ENCODE measurements at regions of chr3 and their contacts with region 1.

Region 1: DNA sequence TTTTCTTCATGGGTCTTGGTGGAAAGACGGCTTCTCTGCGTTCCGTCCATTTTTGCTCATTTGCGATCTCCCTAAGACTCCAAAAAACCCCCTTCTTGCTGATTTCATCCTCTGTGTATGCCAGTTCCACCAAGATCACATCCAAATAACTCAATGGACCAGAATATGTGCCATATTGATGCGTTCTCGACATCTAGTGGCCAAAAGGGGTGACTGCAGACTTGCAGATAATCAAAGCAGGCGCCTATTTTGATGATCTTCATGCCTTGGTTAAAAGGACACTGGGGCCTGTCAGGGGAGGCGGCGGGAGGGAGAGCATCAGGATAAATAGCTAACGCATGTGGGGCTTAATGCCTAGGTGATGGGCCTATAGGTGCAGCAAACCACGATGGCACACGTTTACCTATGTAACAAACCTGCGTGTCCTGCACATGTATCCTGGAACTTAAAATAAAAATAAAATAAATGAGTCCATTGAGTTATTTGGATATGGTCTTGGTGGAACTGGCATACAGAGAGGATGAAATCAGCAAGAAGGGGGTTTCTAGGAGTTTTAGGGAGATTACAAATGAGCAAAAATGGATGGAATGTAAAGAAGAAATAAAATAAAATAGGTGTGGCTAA is 104.2 kb upstream of the RAD18 start:
- DNase-seq: peak in 3 of 5 donors; percentile 33 to 73 (median 51)
- H3K4me3 ChIP-seq: no peak overlapping the region
- H3K27ac ChIP-seq: no peak overlapping the region
- H3K4me1 ChIP-seq: no peaks in the 10 kb centered on the region
- H3K27me3 ChIP-seq: no peaks in the 10 kb centered on the region
- CTCF ChIP-seq: peak; percentile 78

Region 2: DNA sequence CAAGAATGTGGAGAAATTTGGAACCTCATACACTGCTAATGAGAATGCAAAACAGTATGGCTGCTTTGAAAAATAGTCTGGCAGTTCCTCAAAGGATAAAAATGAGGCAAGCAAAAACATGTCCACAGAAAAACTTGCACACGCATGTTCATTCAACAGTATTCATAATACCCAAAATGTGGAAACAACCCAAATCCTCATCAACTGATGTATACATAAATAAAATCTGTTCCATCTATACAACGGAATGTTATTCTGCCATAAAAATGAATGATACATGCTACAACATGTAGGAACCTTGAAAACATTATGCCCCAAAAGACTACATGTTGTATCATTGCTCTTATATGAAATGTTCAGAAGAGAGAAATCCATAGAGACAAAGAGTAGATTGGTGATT is 261.7 kb before region 1 on chr3:
- intact Hi-C with region 1: no loop called
- DNase-seq: no peak
- H3K4me3 ChIP-seq: no peak overlapping the region
- H3K27ac ChIP-seq: no peak overlapping the region
- H3K4me1 ChIP-seq: no peaks in the 10 kb centered on the region
- H3K27me3 ChIP-seq: no peaks in the 10 kb centered on the region
- CTCF ChIP-seq: no peak

Region 3: DNA sequence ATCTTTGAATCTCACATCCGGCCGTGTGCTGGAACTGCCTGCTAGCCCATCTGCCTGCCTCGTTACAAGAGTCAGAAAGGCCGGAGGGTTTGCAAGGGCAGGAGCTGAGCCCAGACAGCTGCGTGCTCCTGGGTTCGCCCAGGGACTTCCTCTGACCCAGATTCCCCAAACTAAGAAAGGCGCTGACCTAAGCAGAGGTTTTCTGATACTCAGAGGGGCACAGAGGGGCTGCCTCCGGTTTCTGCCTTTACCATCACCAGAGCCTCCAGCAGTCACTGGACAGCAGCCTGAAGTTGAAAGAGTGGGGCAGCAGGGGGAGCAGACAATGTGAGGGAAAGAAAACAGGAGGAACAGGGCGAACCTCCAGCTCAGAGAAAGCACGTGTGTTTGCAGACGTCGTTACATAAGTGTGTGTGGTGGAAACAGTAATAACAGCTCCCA is 70.8 kb before region 1 on chr3:
- intact Hi-C with region 1: loop called (anchors 10 kb)
- DNase-seq: peak in 3 of 5 donors; percentile 46 to 78 (median 50)
- H3K4me3 ChIP-seq: no peak overlapping the region
- H3K27ac ChIP-seq: no peak overlapping the region
- H3K4me1 ChIP-seq: peaks cover 0 to 2% (median 0%) of the 10 kb centered on the region in 3 donors
- H3K27me3 ChIP-seq: no peaks in the 10 kb centered on the region
- CTCF ChIP-seq: no peak

Region 4: DNA sequence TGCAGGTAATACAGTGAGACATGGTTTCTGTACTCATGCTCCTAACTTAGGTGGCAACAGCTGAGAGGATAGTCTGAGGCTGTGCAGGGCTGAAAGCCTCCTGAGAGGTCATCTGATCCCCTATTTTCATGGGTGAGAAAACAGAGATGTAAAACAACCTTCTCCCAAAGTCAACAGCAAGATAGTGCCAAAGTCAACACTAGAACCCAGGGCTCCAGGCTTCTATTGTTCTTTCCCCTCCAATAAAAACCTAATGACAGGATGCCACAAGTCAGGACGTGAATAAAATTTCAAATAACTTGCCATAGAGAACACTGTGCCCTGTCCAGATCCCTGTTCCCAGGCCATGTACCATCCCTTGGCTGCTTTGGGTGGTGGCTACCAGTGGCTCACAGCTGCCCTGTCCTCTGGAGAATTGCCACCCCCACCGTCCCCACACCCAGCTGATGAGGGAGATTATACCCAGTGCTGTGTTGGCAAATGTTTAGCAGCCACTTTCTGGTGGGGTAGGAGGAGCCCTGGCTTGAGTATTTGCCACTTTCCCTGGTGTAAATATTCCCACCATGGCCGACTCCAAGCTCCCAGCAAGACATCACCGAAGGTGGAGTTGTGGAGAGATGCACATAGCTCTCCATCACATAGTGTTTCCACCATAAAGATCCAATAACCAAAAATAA is 127.2 kb after region 1 on chr3:
- intact Hi-C with region 1: no loop called
- DNase-seq: no peak
- H3K4me3 ChIP-seq: no peak overlapping the region
- H3K27ac ChIP-seq: no peak overlapping the region
- H3K4me1 ChIP-seq: peaks cover 0 to 6% (median 0%) of the 10 kb centered on the region in 3 donors
- H3K27me3 ChIP-seq: no peaks in the 10 kb centered on the region
- CTCF ChIP-seq: no peak

Region 5: DNA sequence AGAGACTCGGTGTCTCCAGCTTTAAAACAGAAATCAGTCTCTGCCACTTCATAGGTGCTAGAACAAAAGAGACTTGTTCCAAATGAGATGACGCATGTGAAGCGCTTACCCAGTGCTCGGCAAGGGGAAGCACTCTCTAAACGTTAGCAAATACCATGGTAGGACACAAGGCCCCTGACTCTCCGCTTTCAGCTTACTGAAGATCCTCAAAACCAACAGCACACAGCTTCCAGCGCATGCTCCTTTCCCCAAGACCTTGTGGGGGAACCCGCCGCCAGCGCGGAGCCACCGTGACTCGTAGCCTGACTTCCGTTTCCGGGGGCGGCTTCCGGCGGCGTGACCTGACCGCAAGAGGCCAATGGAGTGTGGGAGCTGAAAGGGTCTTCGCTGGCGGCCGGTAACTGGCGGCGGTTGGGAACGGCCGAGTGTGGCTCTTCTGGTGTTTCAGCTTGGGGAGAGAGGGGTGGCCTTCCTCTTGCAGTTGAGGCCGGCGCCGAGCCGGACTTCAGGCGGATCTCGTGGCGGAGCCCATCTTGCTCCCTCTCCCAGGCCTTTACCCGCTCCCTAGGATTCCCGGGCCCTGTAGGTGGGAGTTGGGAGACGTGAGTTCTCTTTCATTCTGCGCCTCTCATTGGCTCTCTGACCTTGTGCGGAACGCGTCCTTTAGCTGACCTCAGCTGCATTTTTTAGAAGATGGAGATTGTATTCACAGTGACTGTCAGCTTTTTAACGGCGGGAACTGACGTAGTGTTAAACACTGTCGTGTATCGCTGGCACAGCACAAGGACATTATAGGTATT is 295.5 kb after region 1 on chr3 and contains the start of gene THUMPD3:
- intact Hi-C with region 1: no loop called
- DNase-seq: peak; percentile 94 to 97 (median 97)
- H3K4me3 ChIP-seq: peak within 1 kb of the TSS; percentile 87 to 97 (median 96)
- H3K27ac ChIP-seq: peak within 1 kb of the TSS; percentile 56 to 84
- H3K4me1 ChIP-seq: peaks cover 0 to 3% (median 0%) of the 10 kb centered on the region in 3 donors
- H3K27me3 ChIP-seq: no peaks in the 10 kb centered on the region
- CTCF ChIP-seq: peak; percentile 4
- total RNA-seq, gene THUMPD3: 44.1 TPM

Measured in kidney (tissue), 22 donors.